AG04449 (cell line): ENCODE measurements at regions of chr1 and their contacts with region 1.

Region 1: GRCh38 chr1:160193091-160193819 is 2.9 kb downstream of the CASQ1 start:
- DNase-seq: peak; percentile 33
- H3K4me3 ChIP-seq: no peak overlapping the region
- CTCF ChIP-seq: peak; percentile 99

Region 2: GRCh38 chr1:160053548-160054365 is 139.5 kb before region 1 on chr1:
- CTCF ChIA-PET with region 1: no interaction called
- POLR2A ChIA-PET with region 1: no interaction called
- DNase-seq: no peak
- H3K4me3 ChIP-seq: no peak overlapping the region
- CTCF ChIP-seq: no peak

Region 3: DNA sequence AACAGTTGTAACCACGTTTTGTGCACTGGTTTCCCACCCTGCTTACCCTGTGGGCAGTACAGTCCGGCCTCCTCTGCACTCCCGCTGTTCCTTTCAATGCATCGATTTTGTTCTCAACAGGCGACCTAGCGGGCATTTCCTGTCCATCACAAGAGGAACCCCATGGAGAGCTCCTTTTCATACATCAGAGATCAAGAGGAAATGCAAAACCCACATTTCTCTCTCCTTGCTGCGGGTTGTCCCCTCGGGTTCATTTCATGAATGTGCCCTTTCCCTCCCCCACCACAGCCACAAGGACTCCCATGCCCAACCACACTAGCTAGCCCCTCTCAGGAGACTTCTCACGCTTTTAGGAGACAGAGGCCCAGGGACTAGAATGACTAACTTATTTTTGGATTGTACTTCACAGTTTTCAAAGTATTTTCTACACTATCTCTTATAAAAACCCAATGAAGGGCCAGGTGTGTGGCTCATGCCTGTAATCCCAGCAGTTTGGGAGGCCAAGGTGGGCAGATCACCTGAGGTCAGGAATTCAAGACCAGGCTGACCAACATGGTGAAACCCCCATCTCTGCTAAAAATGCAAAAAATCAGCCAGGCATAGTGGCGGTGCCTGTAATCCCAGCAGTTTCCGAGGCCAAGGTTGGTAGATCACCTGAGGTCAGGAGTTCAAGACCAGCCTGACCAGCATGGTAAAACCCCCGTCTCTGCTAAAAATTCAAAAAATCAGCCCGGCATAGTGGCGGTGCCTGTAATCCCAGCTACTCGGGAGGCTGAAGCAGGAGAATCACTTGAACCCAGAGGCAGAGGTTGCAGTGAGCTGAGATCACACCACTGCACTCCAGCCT is 23.5 kb before region 1 on chr1:
- CTCF ChIA-PET with region 1: interaction called, 47 read pairs
- POLR2A ChIA-PET with region 1: no interaction called
- DNase-seq: no peak
- H3K4me3 ChIP-seq: no peak overlapping the region
- CTCF ChIP-seq: no peak

Region 4: GRCh38 chr1:160205242-160206035 is 12.2 kb after region 1 on chr1 and contains the start of gene PEA15:
- CTCF ChIA-PET with region 1: interaction called, 214 read pairs
- POLR2A ChIA-PET with region 1: interaction called, 4 read pairs
- DNase-seq: no peak
- H3K4me3 ChIP-seq: peak within 1 kb of the TSS; percentile 96
- CTCF ChIP-seq: no peak

Region 5: DNA sequence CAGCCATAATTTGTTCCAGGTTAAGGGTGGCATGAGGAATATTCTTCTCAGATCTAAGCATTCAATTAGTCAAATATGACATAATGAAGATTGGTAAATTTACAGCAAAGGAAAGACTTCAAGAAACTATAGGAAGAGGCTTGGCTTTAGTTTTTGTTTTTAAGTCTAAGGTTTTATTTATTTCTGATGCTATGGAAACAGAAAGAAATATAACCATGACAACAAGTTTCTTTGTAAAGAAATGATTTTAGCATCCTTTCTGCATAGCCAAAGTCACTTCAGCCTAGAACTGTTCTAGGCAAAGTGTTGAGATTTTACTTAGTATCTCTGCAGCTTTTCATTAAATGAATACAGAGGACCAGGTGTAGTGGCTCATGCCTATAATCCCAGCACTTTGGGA is 39.7 kb after region 1 on chr1:
- CTCF ChIA-PET with region 1: interaction called, 12 read pairs
- POLR2A ChIA-PET with region 1: no interaction called
- DNase-seq: no peak
- H3K4me3 ChIP-seq: no peak overlapping the region
- CTCF ChIP-seq: no peak

Region 6: DNA sequence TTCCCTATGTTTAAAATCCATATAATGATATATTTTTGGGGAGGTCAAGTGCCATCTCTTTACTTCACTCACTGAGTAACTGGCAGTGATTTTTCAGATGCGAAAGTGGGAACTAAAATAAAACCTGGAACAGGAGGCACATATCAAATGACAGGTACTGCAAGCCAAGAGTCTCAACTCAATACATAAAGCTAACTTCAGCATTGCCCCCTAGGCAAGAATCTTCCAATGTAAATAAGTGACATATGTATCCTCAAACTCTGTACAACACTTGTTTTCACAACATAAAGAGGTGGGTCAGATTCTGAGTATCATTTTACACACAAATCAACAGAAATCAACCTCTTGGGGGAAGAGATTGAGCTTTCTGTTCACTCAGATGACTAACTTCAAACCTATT is 51.0 kb after region 1 on chr1:
- CTCF ChIA-PET with region 1: interaction called, 125 read pairs
- POLR2A ChIA-PET with region 1: no interaction called
- DNase-seq: no peak
- H3K4me3 ChIP-seq: no peak overlapping the region
- CTCF ChIP-seq: no peak

Region 7: DNA sequence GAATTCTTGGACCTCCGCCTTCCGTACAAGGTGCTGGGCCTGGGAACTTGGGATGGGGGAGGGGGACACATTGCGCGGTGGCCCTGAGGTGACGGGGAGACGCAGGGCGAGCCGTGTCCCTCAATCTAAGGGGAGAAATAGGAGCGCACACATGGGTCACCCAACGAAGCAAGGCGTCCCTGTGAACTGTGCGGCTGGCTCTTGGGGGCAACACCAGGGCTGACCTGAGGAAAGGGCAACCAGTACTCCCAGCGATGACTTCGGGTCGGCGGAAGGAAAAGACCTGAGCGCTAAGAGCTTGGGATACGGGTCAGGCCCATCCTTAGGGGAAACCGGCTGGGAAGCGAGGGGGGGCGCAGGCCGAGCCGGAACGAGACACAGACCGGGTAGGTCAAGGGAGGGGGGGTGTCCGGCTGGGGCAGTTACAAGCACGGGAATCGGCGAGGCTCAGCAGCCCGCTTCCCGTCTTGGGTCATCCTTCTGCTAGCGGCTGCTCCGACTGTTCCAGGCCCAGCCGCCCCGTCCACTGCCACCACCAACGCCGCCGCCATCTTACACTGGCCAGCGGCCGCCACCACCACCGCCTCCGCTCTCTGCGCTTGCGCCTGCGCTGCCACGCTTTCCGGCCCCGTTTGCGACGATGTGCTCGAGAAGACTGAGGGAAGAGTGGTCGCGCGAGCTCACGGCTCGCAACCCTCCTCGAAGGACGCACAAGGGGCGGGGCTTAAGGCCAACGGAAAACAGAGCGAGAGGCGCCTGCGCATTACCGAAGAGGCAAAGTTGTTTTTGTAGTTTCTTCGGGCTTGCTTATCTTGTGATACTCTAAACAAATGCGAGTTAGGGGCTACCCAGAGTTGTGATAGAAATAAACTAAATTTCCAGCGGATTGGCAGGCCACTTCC is 68.9 kb after region 1 on chr1 and contains the start of gene DCAF8:
- CTCF ChIA-PET with region 1: interaction called, 10 read pairs
- POLR2A ChIA-PET with region 1: interaction called, 7 read pairs
- DNase-seq: peak; percentile 76
- H3K4me3 ChIP-seq: peak within 1 kb of the TSS; percentile 99
- CTCF ChIP-seq: no peak

Region 8: DNA sequence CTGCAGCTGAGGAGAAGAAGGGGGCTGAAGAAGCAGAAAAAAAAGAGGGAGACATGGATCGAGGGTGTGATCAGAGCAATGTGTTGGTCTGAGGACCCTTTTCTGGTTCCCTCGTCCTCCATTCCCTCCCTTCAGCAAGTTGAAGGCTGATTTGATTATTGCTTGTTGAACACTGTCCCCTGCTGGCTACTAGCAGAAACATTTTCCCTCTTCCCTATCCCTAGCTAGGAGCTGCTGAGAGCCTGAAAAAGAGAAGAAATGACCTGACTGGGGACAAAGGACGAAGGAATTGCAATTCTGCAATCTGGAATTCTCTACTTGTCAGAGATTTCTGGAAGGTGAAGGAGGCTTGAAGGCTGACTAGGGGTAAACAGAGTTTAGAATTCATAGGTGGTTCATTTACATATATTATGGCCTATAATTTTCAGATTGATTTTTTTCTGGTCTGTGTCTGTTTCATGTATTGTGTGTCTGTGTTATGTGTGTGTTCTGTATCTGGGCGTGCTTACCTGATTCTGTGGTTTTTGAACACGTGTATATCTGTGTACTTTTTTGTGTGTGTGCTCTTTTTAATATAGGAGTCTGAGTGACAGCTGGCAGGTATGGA is 183.4 kb after region 1 on chr1:
- CTCF ChIA-PET with region 1: interaction called, 17 read pairs
- POLR2A ChIA-PET with region 1: no interaction called
- DNase-seq: no peak
- H3K4me3 ChIP-seq: no peak overlapping the region
- CTCF ChIP-seq: peak; percentile 84